ENCODE measurements at regions of chr12 and their contacts with region 1.

Region 1: GRCh38 chr12:1795785-1796514 is 24.4 kb upstream of the LRTM2 start:
- DNase-seq: peak; percentile 91 to 96
- ATAC-seq: peak; percentile 92 to 96 (median 94)
- H3K4me3 ChIP-seq: peak overlapping the region; percentile 24 to 75 (median 62)
- H3K27ac ChIP-seq: peak overlapping the region; percentile 66 to 98 (median 86)
- H3K4me1 ChIP-seq: peaks cover 3 to 58% (median 38%) of the 10 kb centered on the region in 9 donors
- H3K27me3 ChIP-seq: no peaks in the 10 kb centered on the region
- CTCF ChIP-seq: peak; percentile 93 to 100 (median 99)

Region 2: GRCh38 chr12:1634590-1635191 is 161.3 kb before region 1 on chr12:
- intact Hi-C with region 1: loop called in 1 of 10 experiments (anchors 5 kb)
- DNase-seq: peak; percentile 81 to 86
- ATAC-seq: peak; percentile 27 to 64 (median 48)
- H3K4me3 ChIP-seq: no peak overlapping the region
- H3K27ac ChIP-seq: no peak overlapping the region
- H3K4me1 ChIP-seq: peaks cover 0 to 42% (median 24%) of the 10 kb centered on the region in 9 donors
- H3K27me3 ChIP-seq: peaks cover 0 to 24% (median 0%) of the 10 kb centered on the region in 7 donors
- CTCF ChIP-seq: peak; percentile 68 to 92 (median 86)

Region 3: GRCh38 chr12:1650260-1650977 is 145.5 kb before region 1 on chr12:
- intact Hi-C with region 1: loop called in 9 of 10 experiments (anchors 1 to 2 kb)
- DNase-seq: no peak
- ATAC-seq: peak; percentile 49 to 82 (median 72)
- H3K4me3 ChIP-seq: no peak overlapping the region
- H3K27ac ChIP-seq: peak overlapping the region; percentile 2 to 75 (median 61)
- H3K4me1 ChIP-seq: peaks cover 5 to 35% (median 22%) of the 10 kb centered on the region in 9 donors
- H3K27me3 ChIP-seq: no peaks in the 10 kb centered on the region
- CTCF ChIP-seq: no peak

Region 4: DNA sequence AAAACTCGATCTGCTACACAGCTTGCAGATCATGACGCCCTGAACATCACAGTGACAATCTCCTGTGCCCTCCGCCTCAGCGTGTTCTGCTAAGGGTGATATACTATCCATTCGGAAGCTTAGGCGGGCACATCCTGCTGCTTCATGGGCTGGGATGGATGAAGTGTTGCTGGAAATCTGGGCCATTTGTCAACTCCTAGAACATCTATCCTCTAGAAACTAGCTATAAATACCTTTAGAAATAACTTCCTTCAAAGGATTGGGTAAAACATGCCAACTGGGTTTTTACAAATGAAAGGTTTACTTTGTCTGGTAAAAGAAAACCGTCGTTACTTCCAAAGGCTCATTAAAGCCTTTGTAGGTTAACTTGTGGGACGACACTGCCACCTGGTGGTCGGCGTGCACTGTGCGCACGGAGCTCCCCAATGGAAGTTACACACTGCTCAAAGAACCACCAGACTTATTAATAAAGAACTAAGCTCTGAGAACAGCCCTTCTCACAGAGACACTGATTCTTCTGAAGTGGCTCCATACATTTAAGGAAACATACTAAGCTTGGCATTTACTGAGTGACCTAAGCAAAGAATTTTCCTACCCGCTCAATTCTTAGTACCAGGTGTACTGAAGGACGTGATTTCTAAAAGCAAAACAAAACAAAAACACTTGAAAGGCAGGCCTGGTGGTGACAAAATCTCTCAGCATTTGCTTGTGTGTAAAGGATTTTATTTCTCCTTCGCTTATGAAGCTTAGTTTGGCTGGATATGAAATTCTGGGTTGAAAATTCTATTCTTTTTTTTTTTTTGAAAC is 144.1 kb after region 1 on chr12:
- intact Hi-C with region 1: loop called (anchors 1 to 2 kb)
- DNase-seq: peak; percentile 88 to 92
- ATAC-seq: peak; percentile 64 to 91 (median 86)
- H3K4me3 ChIP-seq: peak overlapping the region in 1 of 10 donors; percentile 6
- H3K27ac ChIP-seq: peak overlapping the region in 2 of 10 donors; percentile 7 to 37
- H3K4me1 ChIP-seq: peaks cover 4 to 31% (median 11%) of the 10 kb centered on the region in 9 donors
- H3K27me3 ChIP-seq: no peaks in the 10 kb centered on the region
- CTCF ChIP-seq: peak; percentile 90 to 99 (median 98)

Region 5: DNA sequence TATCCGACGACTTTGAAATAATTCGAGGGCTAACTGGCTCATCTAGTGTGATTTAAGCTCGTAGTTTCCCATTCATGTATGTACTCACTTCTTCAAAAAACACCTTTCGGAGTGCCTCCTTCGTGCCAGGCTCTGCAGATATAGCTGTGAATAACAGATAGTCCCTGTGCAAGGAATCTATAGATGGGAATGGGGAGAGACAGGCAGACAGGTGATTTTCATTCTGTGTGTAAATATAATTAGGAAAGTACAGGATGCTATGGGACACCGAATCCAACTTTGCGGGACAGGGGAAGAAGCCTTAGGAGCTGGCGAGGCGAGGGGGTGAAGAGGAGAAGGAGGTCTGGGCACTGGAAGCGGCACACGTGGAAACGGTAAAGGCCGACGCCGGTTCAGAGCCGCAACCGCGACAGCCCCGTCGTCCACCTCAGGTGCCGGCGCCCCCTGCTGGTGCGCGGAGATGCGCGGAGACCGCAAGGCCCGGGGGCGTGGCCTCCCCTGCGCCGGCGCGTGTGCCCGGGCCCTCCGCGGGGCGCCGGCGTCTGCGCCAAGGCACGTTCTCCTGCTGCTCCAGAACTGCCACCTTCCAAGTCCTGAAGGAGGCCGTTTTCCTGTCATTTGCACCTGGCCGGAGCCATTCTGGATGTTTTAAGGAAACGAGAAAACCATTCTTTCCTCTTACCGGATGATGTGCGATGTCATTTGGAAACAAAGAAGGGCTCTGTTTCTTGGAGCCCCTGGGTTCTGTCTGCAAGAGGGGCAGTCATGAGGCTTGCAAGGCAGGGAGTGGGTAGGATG is 238.9 kb after region 1 on chr12:
- intact Hi-C with region 1: loop called in 8 of 10 experiments (anchors 2 to 10 kb)
- DNase-seq: peak; percentile 86 to 92
- ATAC-seq: peak; percentile 85 to 93 (median 88)
- H3K4me3 ChIP-seq: peak overlapping the region in 9 of 10 donors; percentile 19 to 53 (median 39)
- H3K27ac ChIP-seq: peak overlapping the region in 3 of 10 donors; percentile 27 to 37 (median 32)
- H3K4me1 ChIP-seq: peaks cover 7 to 86% (median 58%) of the 10 kb centered on the region in 9 donors
- H3K27me3 ChIP-seq: peaks cover 0 to 48% (median 0%) of the 10 kb centered on the region in 7 donors
- CTCF ChIP-seq: peak; percentile 87 to 98 (median 95)

Region 6: DNA sequence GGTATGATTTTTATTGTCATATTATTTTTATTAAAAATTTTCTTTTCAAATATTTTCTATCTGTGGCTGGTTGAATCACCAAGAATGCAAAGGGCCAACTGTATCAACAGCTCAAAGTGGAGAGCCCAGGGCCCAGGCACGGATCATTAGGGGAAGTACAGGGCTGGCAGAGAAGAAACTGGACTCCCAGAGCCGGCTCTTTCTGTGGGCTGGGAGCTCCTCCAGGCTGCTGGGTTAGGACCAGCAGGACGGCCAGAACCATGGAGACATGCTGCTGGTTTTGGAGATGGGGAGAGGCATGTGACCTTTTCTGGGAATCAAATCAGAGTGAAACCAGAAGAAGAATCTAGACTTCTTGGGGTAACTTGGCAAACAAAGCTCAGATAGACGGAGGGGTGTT is 477.3 kb after region 1 on chr12:
- intact Hi-C with region 1: loop called in 1 of 10 experiments (anchors 10 kb)
- DNase-seq: peak in 1 of 2 donors; percentile 50
- ATAC-seq: peak; percentile 56 to 77 (median 66)
- H3K4me3 ChIP-seq: no peak overlapping the region
- H3K27ac ChIP-seq: peak overlapping the region in 5 of 10 donors; percentile 8 to 64 (median 19)
- H3K4me1 ChIP-seq: peaks cover 5 to 76% (median 38%) of the 10 kb centered on the region in 9 donors
- H3K27me3 ChIP-seq: no peaks in the 10 kb centered on the region
- CTCF ChIP-seq: peak in 6 of 9 donors; percentile 22 to 66 (median 54)

Region 7: DNA sequence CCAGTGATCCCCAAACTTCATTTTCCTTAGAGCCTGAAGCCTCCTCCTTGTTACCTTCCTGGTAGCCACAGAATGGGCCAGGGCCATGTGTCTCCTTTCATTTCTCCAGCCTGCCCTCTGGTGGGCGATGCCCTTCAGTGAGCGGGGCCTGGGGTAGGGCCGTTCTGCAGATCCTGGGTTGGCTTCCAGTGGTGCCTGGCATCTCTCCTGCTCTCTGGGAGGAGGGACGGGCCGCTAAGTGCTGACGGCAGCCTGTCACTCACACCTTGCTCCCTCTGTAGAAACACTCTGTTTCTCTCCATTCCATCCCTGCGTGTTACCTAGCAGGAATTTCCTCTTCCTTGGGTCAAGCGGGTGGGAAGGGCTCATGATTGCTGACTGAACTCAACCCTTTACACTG is 488.9 kb after region 1 on chr12:
- intact Hi-C with region 1: loop called in 3 of 10 experiments (anchors 10 kb)
- DNase-seq: peak; percentile 85 to 86
- ATAC-seq: peak; percentile 59 to 87 (median 81)
- H3K4me3 ChIP-seq: no peak overlapping the region
- H3K27ac ChIP-seq: peak overlapping the region in 9 of 10 donors; percentile 50 to 76 (median 70)
- H3K4me1 ChIP-seq: peaks cover 40 to 87% (median 80%) of the 10 kb centered on the region in 9 donors
- H3K27me3 ChIP-seq: no peaks in the 10 kb centered on the region
- CTCF ChIP-seq: peak; percentile 29 to 74 (median 69)

Measured in heart right ventricle (tissue), 16 donors.